ENCODE measurements at regions of chr14 and their contacts with region 1.

Region 1: GRCh38 chr14:20606190-20606901 is 15.2 kb upstream of the RNASE12 start:
- DNase-seq: peak; percentile 55
- H3K4me3 ChIP-seq: no peak overlapping the region
- H3K27ac ChIP-seq: no peak overlapping the region
- H3K4me1 ChIP-seq: peaks cover 4% of the 10 kb centered on the region
- H3K27me3 ChIP-seq: peaks cover 0 to 3% of the 10 kb centered on the region in 2 experiments
- CTCF ChIP-seq: peak; percentile 66 to 79
- POLR2A ChIP-seq: no peak

Region 2: DNA sequence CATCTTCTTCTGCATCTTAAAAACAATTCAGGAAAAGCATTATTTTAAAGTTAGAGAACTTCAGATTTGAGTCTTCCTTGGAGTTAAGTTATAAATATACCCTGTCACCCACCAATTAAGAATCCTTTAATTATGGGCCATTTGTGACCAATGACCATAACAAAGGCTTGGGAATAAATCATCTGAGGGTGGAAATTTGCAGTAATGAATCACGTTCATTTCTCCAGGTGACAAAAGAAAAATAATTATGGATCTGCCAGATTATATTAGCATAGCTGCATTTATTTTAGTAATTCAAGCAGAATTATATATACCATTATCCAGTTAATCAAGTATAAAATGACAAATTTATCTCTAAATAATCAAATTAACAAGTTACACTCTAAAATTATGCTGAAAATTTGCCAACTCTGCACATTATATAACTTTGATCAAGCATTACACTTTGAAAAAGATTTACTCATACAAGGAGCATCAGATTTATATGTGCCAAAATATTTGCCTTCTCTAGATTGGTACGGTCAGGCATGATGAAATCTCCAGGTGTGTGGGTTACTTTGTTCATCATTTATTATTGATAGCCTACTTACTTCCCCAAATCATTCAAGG is 587.0 kb before region 1 on chr14 and contains the start of gene OR4K14:
- CTCF ChIA-PET with region 1: no interaction called
- POLR2A ChIA-PET with region 1: no interaction called
- dilution Hi-C with region 1: no loop called
- intact Hi-C with region 1: no loop called
- DNase-seq: no peak
- H3K4me3 ChIP-seq: no peak within 1 kb of the TSS
- H3K27ac ChIP-seq: no peak within 1 kb of the TSS
- H3K4me1 ChIP-seq: no peaks in the 10 kb centered on the region
- H3K27me3 ChIP-seq: no peaks in the 10 kb centered on the region
- CTCF ChIP-seq: no peak
- POLR2A ChIP-seq: no peak
- total RNA-seq, gene OR4K14: not detected in 2 replicates

Region 3: DNA sequence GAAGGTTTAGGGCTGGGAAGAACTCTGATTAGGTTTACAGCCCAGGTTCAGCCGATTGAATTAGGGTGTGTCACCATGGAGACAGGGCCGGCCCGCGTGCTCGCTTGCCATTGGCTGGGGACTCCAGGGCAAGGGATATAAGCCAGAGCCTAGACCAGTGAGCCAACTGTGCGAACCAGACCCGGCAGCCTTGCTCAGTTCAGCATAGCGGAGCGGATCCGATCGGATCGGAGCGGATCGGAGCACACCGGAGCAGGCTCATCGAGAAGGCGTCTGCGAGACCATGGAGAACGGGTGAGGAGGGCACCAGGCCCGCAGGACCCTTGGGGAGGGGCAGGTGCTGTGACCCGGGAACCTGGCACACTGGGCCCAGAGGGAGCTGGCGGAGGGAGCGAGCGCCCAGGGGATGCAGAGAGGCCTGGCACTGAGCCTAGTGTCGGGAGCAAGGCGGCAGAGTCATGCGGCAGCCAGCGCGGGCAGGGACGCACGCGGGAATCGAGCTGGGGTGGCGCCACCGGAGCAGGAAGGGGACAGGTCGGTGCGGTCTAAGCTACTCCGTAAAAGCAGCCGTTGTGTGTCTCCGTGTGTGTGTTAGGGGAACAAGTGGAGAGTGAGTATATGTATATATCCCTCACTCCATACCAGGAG is 137.0 kb before region 1 on chr14 and contains the start of gene PNP:
- CTCF ChIA-PET with region 1: interaction called, 4 read pairs
- POLR2A ChIA-PET with region 1: interaction called, 3 read pairs
- dilution Hi-C with region 1: no loop called
- intact Hi-C with region 1: loop called (anchors 1 kb)
- DNase-seq: peak; percentile 89
- H3K4me3 ChIP-seq: peak within 1 kb of the TSS; percentile 60 to 94 (median 77)
- H3K27ac ChIP-seq: peak within 1 kb of the TSS; percentile 76
- H3K4me1 ChIP-seq: peaks cover 24% of the 10 kb centered on the region
- H3K27me3 ChIP-seq: peaks cover 2 to 6% of the 10 kb centered on the region in 2 experiments
- CTCF ChIP-seq: no peak
- POLR2A ChIP-seq: peak; percentile 99
- total RNA-seq, gene PNP: 189 and 271 TPM in 2 replicates

Region 4: GRCh38 chr14:20530771-20531571 is 75.4 kb before region 1 on chr14:
- CTCF ChIA-PET with region 1: interaction called, 3 read pairs
- POLR2A ChIA-PET with region 1: no interaction called
- dilution Hi-C with region 1: no loop called
- intact Hi-C with region 1: loop called (anchors 2 kb)
- DNase-seq: peak; percentile 71
- H3K4me3 ChIP-seq: no peak overlapping the region
- H3K27ac ChIP-seq: no peak overlapping the region
- H3K4me1 ChIP-seq: no peaks in the 10 kb centered on the region
- H3K27me3 ChIP-seq: peaks cover 4 to 28% of the 10 kb centered on the region in 2 experiments
- CTCF ChIP-seq: peak; percentile 67 to 72
- POLR2A ChIP-seq: no peak

Measured in endothelial cell of umbilical vein (primary cell).